Naive thymus-derived CD4-positive, alpha-beta T cell (primary cell): ENCODE measurements at regions of chr12 and their contacts with region 1.

Region 1: DNA sequence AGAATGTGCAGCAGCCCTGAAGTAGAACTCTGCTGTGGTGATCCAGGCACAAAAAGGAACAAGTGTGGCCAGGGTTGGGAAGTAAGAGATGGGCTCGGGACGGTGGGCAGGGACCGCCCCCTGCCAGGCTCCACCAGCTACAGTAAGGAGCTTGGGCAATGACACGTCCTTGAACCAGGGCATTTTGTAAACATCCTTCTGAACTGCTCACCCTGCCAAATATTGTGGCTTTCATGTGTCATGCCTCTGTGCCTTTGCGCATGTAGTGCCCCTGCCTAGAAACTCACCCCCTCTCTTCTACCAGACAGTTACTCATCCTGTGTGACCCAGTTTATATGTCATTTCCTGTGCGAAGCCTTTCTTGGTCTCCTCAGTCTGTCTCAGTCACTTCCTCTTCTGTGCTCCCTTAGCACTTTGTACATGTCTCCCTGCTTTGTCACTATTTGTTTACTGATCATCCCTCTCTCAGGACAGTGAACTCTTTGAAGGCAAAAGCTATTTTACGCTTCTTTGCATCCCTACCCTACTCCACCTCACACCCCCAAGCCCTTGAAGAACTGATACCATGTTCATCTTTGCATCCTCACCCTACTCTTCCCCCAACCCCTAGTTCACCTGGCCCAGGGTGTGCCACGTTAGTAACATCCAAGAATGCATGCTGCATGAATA is 108.9 kb upstream of the PLEKHG7 start:
- DNase-seq: peak; percentile 51 to 97 (median 92)
- ATAC-seq: peak; percentile 95
- H3K4me3 ChIP-seq: peak overlapping the region; percentile 16
- H3K4me3 Mint-ChIP-seq: peak overlapping the region; percentile 22 to 83 (median 72)
- H3K27ac ChIP-seq: peak overlapping the region; percentile 86
- H3K27ac Mint-ChIP-seq: peak overlapping the region; percentile 90 to 100 (median 98)
- H3K4me1 ChIP-seq: peaks cover 27 to 30% of the 10 kb centered on the region in 2 donors
- H3K4me1 Mint-ChIP-seq: peaks cover 23 to 74% (median 44%) of the 10 kb centered on the region in 7 donors
- H3K27me3 ChIP-seq: no peaks in the 10 kb centered on the region
- H3K27me3 Mint-ChIP-seq: no peaks in the 10 kb centered on the region

Region 2: DNA sequence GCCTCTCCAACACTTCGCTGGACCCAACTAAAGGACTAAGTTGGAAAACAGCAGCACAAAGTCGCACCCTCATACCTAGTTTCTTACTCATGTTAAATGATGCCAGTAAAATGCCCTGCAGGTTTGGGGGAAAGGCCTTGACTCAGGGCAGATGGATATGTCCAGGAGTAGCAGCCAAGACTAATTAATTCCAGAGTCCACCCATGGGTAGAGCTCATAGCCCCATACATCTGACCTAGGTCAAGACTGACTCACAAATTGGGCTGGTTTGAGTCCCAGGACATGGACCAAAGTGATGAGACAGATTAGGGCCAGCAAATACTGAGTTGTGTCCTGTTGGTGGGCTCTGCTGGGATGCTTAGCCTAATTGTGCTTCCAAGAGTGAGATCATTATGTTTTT is 224.2 kb before region 1 on chr12:
- CTCF ChIA-PET with region 1: no interaction called
- POLR2A ChIA-PET with region 1: no interaction called
- intact Hi-C with region 1: no loop called
- DNase-seq: no peak
- ATAC-seq: no peak
- H3K4me3 ChIP-seq: no peak overlapping the region
- H3K4me3 Mint-ChIP-seq: no peak overlapping the region
- H3K27ac ChIP-seq: no peak overlapping the region
- H3K27ac Mint-ChIP-seq: peak overlapping the region in 1 of 9 donors; percentile 5
- H3K4me1 ChIP-seq: peaks cover 0 to 10% of the 10 kb centered on the region in 2 donors
- H3K4me1 Mint-ChIP-seq: peaks cover 6 to 65% (median 55%) of the 10 kb centered on the region in 7 donors
- H3K27me3 ChIP-seq: no peaks in the 10 kb centered on the region
- H3K27me3 Mint-ChIP-seq: no peaks in the 10 kb centered on the region

Region 3: DNA sequence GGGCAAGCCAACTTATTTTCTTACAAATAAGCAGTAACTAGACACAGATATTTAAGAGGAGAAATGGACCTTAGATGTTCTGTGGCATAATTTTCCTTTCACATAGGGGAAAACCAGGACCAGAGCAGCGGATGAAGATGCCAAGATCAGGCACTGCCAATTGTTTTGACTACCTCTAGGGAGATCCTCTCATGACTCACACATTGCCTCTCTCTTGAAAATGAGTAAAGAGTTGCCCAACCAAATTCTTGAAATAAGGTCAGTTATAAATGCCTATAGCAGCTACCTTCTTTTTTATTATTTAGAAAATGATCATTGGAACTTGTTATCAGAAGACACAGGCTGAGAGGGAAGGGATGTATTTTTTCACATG is 154.5 kb before region 1 on chr12:
- CTCF ChIA-PET with region 1: no interaction called
- POLR2A ChIA-PET with region 1: no interaction called
- intact Hi-C with region 1: no loop called
- DNase-seq: no peak
- ATAC-seq: no peak
- H3K4me3 ChIP-seq: no peak overlapping the region
- H3K4me3 Mint-ChIP-seq: no peak overlapping the region
- H3K27ac ChIP-seq: no peak overlapping the region
- H3K27ac Mint-ChIP-seq: no peak overlapping the region
- H3K4me1 ChIP-seq: peaks cover 0 to 7% of the 10 kb centered on the region in 2 donors
- H3K4me1 Mint-ChIP-seq: peaks cover 8 to 47% (median 20%) of the 10 kb centered on the region in 7 donors
- H3K27me3 ChIP-seq: no peaks in the 10 kb centered on the region
- H3K27me3 Mint-ChIP-seq: peaks cover 0 to 3% (median 0%) of the 10 kb centered on the region in 5 donors

Region 4: GRCh38 chr12:92582475-92582874 is 11.4 kb before region 1 on chr12:
- CTCF ChIA-PET with region 1: interaction called, 5 read pairs
- POLR2A ChIA-PET with region 1: interaction called, 11 read pairs
- intact Hi-C with region 1: no loop called
- DNase-seq: no peak
- ATAC-seq: no peak
- H3K4me3 ChIP-seq: no peak overlapping the region
- H3K4me3 Mint-ChIP-seq: no peak overlapping the region
- H3K27ac ChIP-seq: no peak overlapping the region
- H3K27ac Mint-ChIP-seq: peak overlapping the region in 1 of 9 donors; percentile 41
- H3K4me1 ChIP-seq: no peaks in the 10 kb centered on the region
- H3K4me1 Mint-ChIP-seq: peaks cover 0 to 5% (median 0%) of the 10 kb centered on the region in 7 donors
- H3K27me3 ChIP-seq: no peaks in the 10 kb centered on the region
- H3K27me3 Mint-ChIP-seq: no peaks in the 10 kb centered on the region

Region 5: DNA sequence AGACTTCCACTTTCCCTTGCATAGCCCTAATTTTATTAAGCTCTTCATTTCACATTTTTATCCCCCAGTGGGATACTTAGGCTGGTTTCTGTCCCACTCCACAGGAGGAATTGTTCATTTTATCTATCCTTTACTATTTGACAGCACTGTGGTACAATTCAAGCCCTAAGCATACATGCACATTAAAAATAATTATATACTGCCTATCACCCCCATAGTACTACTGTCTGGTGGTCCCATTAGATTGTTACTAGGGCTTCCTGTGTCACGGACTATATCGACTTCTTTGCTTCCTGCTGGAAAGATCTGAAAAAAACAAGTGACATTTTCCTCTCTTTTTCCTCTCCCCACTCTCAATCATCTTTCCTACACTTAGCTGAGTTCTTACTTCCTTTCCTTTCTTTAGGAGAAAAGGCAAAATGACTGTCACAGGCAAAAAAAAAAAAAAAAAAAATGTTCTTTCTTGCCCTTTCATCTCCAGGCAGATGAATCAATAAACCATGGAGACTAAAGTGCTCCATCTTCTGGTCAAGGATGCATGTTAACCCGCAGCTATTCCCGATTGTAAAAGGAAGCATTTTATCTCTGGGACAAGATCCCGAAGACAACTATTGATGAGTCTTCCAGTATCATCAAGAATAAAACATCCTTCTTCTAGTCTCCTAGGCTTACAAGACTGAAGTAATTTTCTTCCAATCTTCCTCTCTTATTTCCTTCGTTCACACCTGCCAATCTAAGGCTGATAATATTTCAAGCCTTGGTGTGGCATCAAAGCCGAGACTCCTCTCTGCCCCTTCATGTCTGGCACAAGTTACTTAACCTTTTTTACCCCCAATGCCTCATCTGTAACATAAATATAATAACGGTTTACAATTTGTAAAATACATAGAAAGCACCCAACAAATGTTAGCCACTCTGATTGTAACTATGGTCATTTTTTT is 14.6 kb after region 1 on chr12:
- CTCF ChIA-PET with region 1: interaction called, 6 read pairs
- POLR2A ChIA-PET with region 1: interaction called, 6 read pairs
- intact Hi-C with region 1: loop called in 1 of 2 experiments (anchors 1 kb)
- DNase-seq: peak in 2 of 9 donors; percentile 6 to 34
- ATAC-seq: peak; percentile 32
- H3K4me3 ChIP-seq: no peak overlapping the region
- H3K4me3 Mint-ChIP-seq: peak overlapping the region in 8 of 10 donors; percentile 10 to 79 (median 66)
- H3K27ac ChIP-seq: no peak overlapping the region
- H3K27ac Mint-ChIP-seq: peak overlapping the region in 7 of 9 donors; percentile 24 to 89 (median 68)
- H3K4me1 ChIP-seq: no peaks in the 10 kb centered on the region
- H3K4me1 Mint-ChIP-seq: peaks cover 9 to 20% (median 12%) of the 10 kb centered on the region in 7 donors
- H3K27me3 ChIP-seq: no peaks in the 10 kb centered on the region
- H3K27me3 Mint-ChIP-seq: no peaks in the 10 kb centered on the region